ENCODE measurements at regions of chr5 and their contacts with region 1.

Region 1: GRCh38 chr5:180605554-180606214 is 14.4 kb upstream of the SCGB3A1 start:
- DNase-seq: peak; percentile 23
- H3K4me3 ChIP-seq: no peak overlapping the region
- H3K27ac ChIP-seq: no peak overlapping the region
- H3K27me3 ChIP-seq: peaks cover 3% of the 10 kb centered on the region
- CTCF ChIP-seq: peak; percentile 78

Region 2: DNA sequence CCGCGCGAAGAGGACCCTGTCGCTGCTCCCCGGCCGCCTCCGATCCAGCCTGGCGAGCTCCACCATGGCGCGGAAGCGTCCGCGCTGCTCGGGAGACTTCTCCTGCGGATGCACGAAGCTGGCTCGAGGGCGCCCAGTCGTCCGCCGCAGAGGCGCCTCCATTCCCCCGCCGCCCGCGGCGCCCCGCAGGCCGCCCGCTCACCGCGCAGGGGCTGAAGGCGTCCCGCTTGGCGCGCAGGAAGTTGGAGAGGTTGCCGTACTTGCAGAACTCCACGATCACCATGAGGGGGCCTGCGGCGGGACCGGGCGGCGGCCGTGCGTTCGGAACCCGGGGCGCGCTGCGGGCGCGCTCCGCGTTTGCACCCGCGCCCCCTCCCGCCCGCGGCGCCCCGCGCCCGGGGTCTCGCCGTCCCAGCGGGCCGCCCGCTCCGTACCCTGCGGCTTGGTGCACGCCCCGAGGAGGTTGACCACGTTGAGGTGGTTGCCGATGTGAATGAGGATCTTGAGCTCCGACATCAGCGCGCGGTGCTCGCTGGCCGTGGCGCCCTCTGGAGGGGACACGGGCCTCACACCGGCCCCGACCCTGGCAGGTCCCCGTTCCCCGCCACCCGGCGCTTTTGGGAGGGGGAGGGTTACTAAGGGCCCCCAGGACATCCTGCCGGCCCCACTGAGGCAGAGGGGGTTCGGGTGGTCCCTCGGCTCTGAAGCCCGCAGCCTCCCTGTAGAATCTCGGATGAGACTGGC is 13.3 kb after region 1 on chr5:
- CTCF ChIA-PET with region 1: interaction called, 13 read pairs
- POLR2A ChIA-PET with region 1: no interaction called
- DNase-seq: no peak
- H3K4me3 ChIP-seq: peak overlapping the region; percentile 46
- H3K27ac ChIP-seq: no peak overlapping the region
- H3K27me3 ChIP-seq: no peaks in the 10 kb centered on the region
- CTCF ChIP-seq: peak; percentile 34

Region 3: DNA sequence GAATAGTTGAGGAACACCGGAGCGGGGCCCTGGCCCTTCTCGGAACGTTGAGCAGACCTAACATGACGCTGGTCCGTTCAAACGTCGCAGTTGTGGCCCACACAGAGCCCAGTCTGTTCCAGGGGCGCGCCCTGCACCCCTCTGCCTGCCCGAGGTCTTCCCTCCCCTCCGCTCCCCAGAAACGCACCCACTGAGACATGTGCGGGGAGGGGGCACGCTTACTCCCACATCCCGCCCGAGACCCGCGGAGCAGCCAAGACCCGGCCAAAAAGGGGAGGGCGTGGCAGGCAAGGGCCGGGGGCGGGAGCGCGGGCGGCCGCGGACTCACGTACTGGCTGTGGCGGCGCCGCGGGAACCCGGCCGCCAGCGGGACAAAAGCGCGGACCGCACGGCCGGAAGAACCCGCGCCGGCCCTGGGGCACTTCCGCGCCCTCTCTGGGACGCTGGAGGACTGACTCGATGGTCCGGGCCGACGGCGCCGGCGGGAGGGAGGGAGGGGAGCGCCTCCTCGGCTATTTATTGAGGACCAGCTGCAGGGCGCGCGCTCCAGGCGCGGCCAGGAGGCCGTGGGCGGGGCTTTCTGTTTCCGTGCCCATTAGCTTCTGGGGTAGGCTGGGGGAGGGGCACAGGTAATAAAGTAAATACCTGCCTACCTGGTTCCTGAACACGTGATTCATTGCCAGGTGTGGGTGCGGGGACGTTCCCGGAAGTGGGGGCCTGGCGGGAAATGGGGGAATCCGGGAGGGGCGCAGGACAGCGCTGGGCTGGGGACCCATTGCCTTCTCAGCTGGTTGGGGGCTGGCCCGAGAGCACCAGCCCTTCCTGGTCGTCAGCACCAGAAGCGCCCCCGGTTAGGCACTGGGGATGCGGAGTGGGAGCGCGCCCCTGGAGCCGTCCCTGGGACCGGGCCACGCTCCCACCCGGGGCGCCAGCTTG is 255.5 kb after region 1 on chr5 and contains the start of gene ZFP62:
- CTCF ChIA-PET with region 1: no interaction called
- POLR2A ChIA-PET with region 1: no interaction called
- DNase-seq: peak; percentile 71
- H3K4me3 ChIP-seq: peak within 1 kb of the TSS; percentile 98
- H3K27ac ChIP-seq: peak within 1 kb of the TSS; percentile 65
- H3K27me3 ChIP-seq: no peaks in the 10 kb centered on the region
- CTCF ChIP-seq: no peak
- polyA plus RNA-seq, gene ZFP62: 13.7 and 18.0 TPM in 2 replicates

Measured in AG04450 (cell line).